ENCODE measurements at regions of chr12 and their contacts with region 1.

Region 1: DNA sequence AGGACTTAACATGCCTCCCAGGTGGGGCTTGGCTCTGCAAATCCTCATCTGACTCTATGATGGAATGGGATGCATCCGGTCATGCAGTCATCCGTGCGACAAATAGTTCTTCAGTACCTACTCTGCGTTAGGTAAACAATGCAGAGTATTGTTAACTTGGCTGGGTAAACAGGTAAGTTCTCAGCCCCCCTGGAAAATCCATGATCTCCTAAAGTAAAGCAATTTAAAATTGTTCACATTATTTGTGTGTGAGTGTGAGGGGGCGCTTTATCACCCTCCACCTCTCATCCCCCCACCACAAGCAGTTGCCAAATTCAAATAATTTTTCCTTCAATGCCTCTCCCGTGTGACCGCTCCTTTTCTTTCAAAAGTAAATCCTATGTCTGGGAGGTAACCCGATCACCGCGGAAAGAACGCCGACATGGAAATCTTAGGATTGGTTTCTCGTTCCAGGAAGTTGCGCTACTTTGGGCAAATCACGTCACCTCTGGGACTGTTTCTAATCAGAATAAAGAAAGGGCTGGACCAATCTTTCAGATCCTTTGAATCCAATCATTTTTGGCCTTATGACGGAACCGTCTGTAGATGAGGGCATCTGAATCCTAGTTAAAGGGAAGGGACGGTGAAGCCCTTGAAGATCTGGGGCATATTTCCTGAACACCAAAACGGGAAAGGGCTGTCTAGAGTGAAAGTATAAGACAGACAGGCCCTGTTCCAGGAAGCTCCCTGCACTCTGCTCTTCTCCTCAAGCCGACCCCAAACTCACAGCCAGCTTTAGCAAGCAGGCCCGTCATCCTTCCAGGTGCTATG is 44.0 kb upstream of the SINHCAF start:
- DNase-seq: peak; percentile 49

Region 2: GRCh38 chr12:31267966-31268365 is 102.0 kb before region 1 on chr12:
- CTCF ChIA-PET with region 1: no interaction called
- POLR2A ChIA-PET with region 1: no interaction called
- DNase-seq: no peak

Region 3: GRCh38 chr12:31325877-31326631 is 43.9 kb before region 1 on chr12 and contains the start of gene SINHCAF:
- CTCF ChIA-PET with region 1: no interaction called
- POLR2A ChIA-PET with region 1: interaction called, 11 read pairs
- DNase-seq: peak; percentile 94

Measured in HEK293T (cell line).